ENCODE measurements at regions of chr4 and their contacts with region 1.

Region 1: DNA sequence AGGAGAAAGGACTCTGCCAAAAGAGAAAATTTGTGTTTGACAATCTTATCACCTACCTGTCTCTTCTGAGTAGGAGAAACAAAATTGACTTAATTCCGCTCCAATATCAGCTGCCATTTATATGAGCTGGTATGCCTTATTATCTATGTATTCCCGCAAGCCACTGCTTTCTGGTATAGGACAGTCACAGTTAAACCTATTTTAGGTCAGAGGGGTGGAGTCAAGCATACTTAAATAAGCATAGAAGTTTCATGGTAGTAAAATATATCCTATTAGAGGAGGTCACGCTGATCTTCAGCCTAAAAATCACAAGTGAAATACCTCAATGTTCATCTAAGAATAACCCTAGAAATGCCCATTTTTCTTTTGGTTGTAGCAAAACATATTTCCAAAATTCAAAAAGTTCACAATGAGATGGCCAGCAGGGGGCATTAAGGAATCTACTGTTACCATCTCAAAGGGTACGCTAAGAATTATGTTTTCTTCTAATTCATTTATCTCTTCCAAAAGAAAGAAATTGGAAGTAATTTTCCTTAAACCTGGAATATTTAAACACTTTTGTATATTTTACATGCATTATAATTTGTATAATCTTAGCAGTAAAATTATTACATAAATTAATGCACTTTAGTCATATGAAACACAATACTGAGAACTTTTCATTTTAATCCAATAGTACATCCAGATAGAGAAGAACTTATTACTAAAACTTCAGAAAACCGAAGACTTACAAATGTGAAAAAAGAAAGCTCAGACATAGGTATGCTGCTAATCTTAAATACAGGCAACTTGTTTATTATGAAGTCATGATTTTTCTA is 10.5 kb downstream of the PPAT start:
- DNase-seq: peak; percentile 39
- H3K4me3 ChIP-seq: no peak overlapping the region; a peak in 1 of 4 replicates
- H3K27ac ChIP-seq: no peak overlapping the region; a peak in 1 of 4 replicates
- H3K4me1 ChIP-seq: no peaks in the 10 kb centered on the region; a peak in 1 of 4 replicates
- H3K27me3 ChIP-seq: no peaks in the 10 kb centered on the region
- CTCF ChIP-seq: peak; percentile 82
- EP300 ChIP-seq: no peak
- RAD21 ChIP-seq: peak; percentile 64

Region 2: GRCh38 chr4:56410235-56411062 is 14.5 kb before region 1 on chr4:
- CTCF ChIA-PET with region 1: interaction called, 17 read pairs
- POLR2A ChIA-PET with region 1: no interaction called
- DNase-seq: peak; percentile 69
- H3K4me3 ChIP-seq: peak overlapping the region; percentile 40 to 55
- H3K27ac ChIP-seq: peak overlapping the region; percentile 92 to 95
- H3K4me1 ChIP-seq: peaks cover 5 to 22% of the 10 kb centered on the region in 2 experiments; a peak in 3 of 4 replicates
- H3K27me3 ChIP-seq: no peaks in the 10 kb centered on the region
- CTCF ChIP-seq: no peak
- EP300 ChIP-seq: no peak; a peak in 2 of 4 replicates
- RAD21 ChIP-seq: no peak